CD4-positive, alpha-beta memory T cell (primary cell): ENCODE measurements at regions of chr7 and their contacts with region 1.

Region 1: GRCh38 chr7:149261829-149262617 is at the start of gene ZNF783:
- DNase-seq: peak; percentile 84 to 89 (median 87)
- H3K4me3 ChIP-seq: peak within 1 kb of the TSS; percentile 52 to 61
- H3K4me3 Mint-ChIP-seq: peak within 1 kb of the TSS; percentile 84 to 92 (median 87)
- H3K27ac ChIP-seq: peak within 1 kb of the TSS; percentile 68
- H3K27ac Mint-ChIP-seq: peak within 1 kb of the TSS; percentile 87 to 95 (median 92)
- H3K4me1 ChIP-seq: peaks cover 25% of the 10 kb centered on the region
- H3K4me1 Mint-ChIP-seq: peaks cover 13 to 33% (median 21%) of the 10 kb centered on the region in 4 donors
- H3K27me3 ChIP-seq: no peaks in the 10 kb centered on the region
- H3K27me3 Mint-ChIP-seq: no peaks in the 10 kb centered on the region
- total RNA-seq, gene ZNF783: 42.6 to 43.5 TPM

Region 2: GRCh38 chr7:149147072-149147751 is 114.8 kb before region 1 on chr7 and contains the start of gene ZNF398:
- CTCF ChIA-PET with region 1: no interaction called
- POLR2A ChIA-PET with region 1: interaction called, 13 read pairs
- intact Hi-C with region 1: no loop called
- DNase-seq: peak; percentile 83 to 89 (median 85)
- H3K4me3 ChIP-seq: peak within 1 kb of the TSS; percentile 71 to 74
- H3K4me3 Mint-ChIP-seq: peak within 1 kb of the TSS; percentile 85 to 95 (median 92)
- H3K27ac ChIP-seq: peak within 1 kb of the TSS; percentile 86
- H3K27ac Mint-ChIP-seq: peak within 1 kb of the TSS; percentile 87 to 97 (median 96)
- H3K4me1 ChIP-seq: peaks cover 35% of the 10 kb centered on the region
- H3K4me1 Mint-ChIP-seq: peaks cover 18 to 46% (median 32%) of the 10 kb centered on the region in 4 donors
- H3K27me3 ChIP-seq: no peaks in the 10 kb centered on the region
- H3K27me3 Mint-ChIP-seq: no peaks in the 10 kb centered on the region
- total RNA-seq, gene ZNF398: 26.9 to 28.4 TPM

Region 3: DNA sequence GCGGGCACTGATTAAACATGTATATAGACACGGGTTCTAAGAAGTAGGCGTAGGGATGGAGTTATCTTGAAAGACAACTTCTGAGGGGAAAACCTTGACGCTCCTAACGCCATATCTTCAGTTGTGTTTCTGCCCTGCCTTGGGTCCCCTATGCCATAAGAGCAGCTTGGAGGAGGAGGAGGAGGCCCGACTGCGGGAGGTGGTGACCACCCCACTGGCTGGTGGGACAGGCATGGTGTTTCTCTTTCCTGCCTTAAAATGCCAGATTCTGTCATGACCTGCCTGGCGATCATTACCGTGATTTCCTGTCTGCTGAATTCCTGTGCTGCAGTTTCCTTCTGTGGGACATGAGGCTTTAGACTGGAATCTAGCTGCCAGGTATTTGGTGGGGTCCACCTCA is 15.8 kb after region 1 on chr7:
- CTCF ChIA-PET with region 1: interaction called, 63 read pairs
- POLR2A ChIA-PET with region 1: interaction called, 5 read pairs
- intact Hi-C with region 1: no loop called
- DNase-seq: no peak
- H3K4me3 ChIP-seq: no peak overlapping the region
- H3K4me3 Mint-ChIP-seq: no peak overlapping the region
- H3K27ac ChIP-seq: no peak overlapping the region
- H3K27ac Mint-ChIP-seq: no peak overlapping the region
- H3K4me1 ChIP-seq: no peaks in the 10 kb centered on the region
- H3K4me1 Mint-ChIP-seq: peaks cover 0 to 12% (median 4%) of the 10 kb centered on the region in 4 donors
- H3K27me3 ChIP-seq: no peaks in the 10 kb centered on the region
- H3K27me3 Mint-ChIP-seq: no peaks in the 10 kb centered on the region

Region 4: GRCh38 chr7:149460493-149461277 is 198.7 kb after region 1 on chr7 and contains the start of gene ZNF777:
- CTCF ChIA-PET with region 1: interaction called, 5 read pairs
- POLR2A ChIA-PET with region 1: interaction called, 17 read pairs
- intact Hi-C with region 1: no loop called
- DNase-seq: peak; percentile 80 to 88 (median 83)
- H3K4me3 ChIP-seq: peak within 1 kb of the TSS; percentile 73 to 74
- H3K4me3 Mint-ChIP-seq: peak within 1 kb of the TSS; percentile 86 to 91 (median 88)
- H3K27ac ChIP-seq: peak within 1 kb of the TSS; percentile 62
- H3K27ac Mint-ChIP-seq: peak within 1 kb of the TSS; percentile 48 to 90 (median 87)
- H3K4me1 ChIP-seq: peaks cover 24% of the 10 kb centered on the region
- H3K4me1 Mint-ChIP-seq: peaks cover 16 to 33% (median 28%) of the 10 kb centered on the region in 4 donors
- H3K27me3 ChIP-seq: peaks cover 6% of the 10 kb centered on the region
- H3K27me3 Mint-ChIP-seq: peaks cover 0 to 3% of the 10 kb centered on the region in 2 donors
- total RNA-seq, gene ZNF777: 15.9 to 16.8 TPM